ENCODE measurements at regions of chr11 and their contacts with region 1.

Region 1: DNA sequence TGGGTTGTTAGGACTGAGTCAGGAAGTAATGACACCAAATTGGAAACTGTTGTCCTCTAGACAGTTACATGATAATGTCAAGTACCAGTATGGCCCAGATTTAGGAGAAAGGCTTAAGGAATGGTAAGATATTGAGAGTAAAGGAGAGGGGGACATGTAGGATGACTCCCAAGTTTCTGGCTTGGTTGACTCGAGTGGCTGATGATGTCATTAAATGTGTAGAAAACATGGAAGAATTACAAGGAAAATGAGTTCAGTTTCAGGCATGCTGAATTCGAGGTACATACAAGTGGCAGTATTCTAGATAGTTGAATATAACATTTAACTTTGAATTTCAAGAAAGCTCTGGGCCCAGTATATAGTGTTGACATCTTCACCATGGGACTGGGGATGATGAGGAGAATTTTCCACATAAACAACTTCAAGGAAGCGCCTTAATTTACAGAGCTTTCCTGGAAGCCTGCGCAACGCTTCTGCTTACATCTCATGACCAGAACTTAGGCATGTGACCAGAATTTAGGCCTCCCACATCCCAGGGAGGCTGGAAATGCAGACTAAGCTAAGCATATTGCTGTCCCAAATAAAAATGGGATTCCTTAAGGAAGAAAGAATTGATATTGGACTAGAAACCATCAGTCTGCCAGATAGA is 3.8 kb downstream of the CFAP300 start:
- DNase-seq: no peak
- ATAC-seq: no peak
- H3K4me3 ChIP-seq: no peak overlapping the region
- H3K4me3 Mint-ChIP-seq: no peak overlapping the region
- H3K27ac ChIP-seq: no peak overlapping the region
- H3K27ac Mint-ChIP-seq: no peak overlapping the region
- H3K4me1 ChIP-seq: no peaks in the 10 kb centered on the region
- H3K4me1 Mint-ChIP-seq: peaks cover 0 to 12% (median 5%) of the 10 kb centered on the region in 7 donors
- H3K27me3 ChIP-seq: no peaks in the 10 kb centered on the region
- H3K27me3 Mint-ChIP-seq: peaks cover 28 to 42% (median 34%) of the 10 kb centered on the region in 5 donors

Region 2: GRCh38 chr11:102026959-102027358 is 24.1 kb before region 1 on chr11:
- CTCF ChIA-PET with region 1: no interaction called
- POLR2A ChIA-PET with region 1: no interaction called
- intact Hi-C with region 1: no loop called
- DNase-seq: no peak
- ATAC-seq: no peak
- H3K4me3 ChIP-seq: no peak overlapping the region
- H3K4me3 Mint-ChIP-seq: no peak overlapping the region
- H3K27ac ChIP-seq: no peak overlapping the region
- H3K27ac Mint-ChIP-seq: no peak overlapping the region
- H3K4me1 ChIP-seq: no peaks in the 10 kb centered on the region
- H3K4me1 Mint-ChIP-seq: no peaks in the 10 kb centered on the region
- H3K27me3 ChIP-seq: no peaks in the 10 kb centered on the region
- H3K27me3 Mint-ChIP-seq: peaks cover 8 to 38% (median 29%) of the 10 kb centered on the region in 5 donors

Region 3: GRCh38 chr11:102109896-102110760 is 59.1 kb after region 1 on chr11 and contains the start of gene YAP1:
- CTCF ChIA-PET with region 1: no interaction called
- POLR2A ChIA-PET with region 1: no interaction called
- intact Hi-C with region 1: loop called in 1 of 2 experiments (anchors 10 kb)
- DNase-seq: peak; percentile 26 to 70 (median 55)
- ATAC-seq: peak; percentile 85
- H3K4me3 ChIP-seq: peak within 1 kb of the TSS; percentile 69
- H3K4me3 Mint-ChIP-seq: peak within 1 kb of the TSS; percentile 88 to 98 (median 94)
- H3K27ac ChIP-seq: no peak within 1 kb of the TSS
- H3K27ac Mint-ChIP-seq: peak within 1 kb of the TSS in 3 of 9 donors; percentile 25 to 77 (median 65)
- H3K4me1 ChIP-seq: peaks cover 0 to 6% of the 10 kb centered on the region in 2 donors
- H3K4me1 Mint-ChIP-seq: peaks cover 5 to 18% (median 11%) of the 10 kb centered on the region in 7 donors
- H3K27me3 ChIP-seq: peaks cover 3% of the 10 kb centered on the region in 2 donors
- H3K27me3 Mint-ChIP-seq: peaks cover 26 to 64% (median 58%) of the 10 kb centered on the region in 5 donors
- total RNA-seq, gene YAP1: 0.15 TPM in 1 of 5 experiments, not detected in the others